Endothelial cell of umbilical vein (primary cell): ENCODE measurements at regions of chr7 and their contacts with region 1.

Region 1: DNA sequence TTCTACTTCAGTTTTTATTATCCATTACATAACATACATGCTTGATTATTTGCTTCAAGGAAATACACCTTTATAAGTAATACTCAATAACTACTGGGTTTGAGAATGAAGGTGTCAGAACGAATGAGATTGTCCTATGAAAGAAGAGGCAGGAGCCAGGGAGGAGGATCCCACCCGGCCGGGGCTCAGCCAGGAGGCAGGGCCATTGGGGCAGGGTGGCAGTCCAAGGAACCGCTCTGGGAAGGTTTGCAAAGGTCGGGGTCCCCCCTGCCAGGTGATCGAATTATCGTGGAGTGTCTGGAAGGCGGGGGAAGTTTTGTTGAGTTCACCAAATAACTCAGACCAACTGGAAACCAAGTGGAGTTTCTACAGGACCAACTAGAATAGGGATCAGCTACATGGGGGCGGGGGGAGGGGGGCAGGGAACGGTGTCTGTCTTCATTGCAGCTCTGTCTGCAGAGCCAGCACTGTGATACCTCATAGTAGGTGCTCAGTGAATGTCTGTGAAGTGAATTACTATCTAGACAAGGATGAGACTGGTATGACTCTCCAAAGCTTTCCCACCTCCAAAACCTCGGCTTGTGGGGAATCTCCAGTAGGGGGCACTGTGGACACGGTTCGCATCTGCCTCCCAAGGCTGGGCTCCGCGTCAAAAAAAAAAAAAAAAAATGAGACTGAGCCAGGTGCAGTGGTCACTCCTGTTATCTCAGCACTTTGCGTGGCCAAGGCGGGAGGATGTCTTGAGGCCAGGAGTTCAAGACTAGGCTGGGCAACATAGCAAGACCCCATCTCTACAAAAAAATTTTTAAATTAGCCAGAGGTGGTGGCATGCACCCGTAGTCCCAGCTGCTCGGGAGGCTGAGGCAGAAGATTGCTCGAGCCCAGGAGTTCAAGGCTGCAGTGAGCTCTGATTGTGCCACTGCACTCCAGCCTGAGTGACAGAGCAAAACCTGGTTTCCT is 9.4 kb downstream of the TRIM56 start:
- DNase-seq: peak; percentile 63
- H3K4me3 ChIP-seq: no peak overlapping the region
- H3K27ac ChIP-seq: peak overlapping the region; percentile 41
- H3K4me1 ChIP-seq: peaks cover 22% of the 10 kb centered on the region
- H3K27me3 ChIP-seq: no peaks in the 10 kb centered on the region
- CTCF ChIP-seq: peak; percentile 80 to 81
- POLR2A ChIP-seq: no peak

Region 2: DNA sequence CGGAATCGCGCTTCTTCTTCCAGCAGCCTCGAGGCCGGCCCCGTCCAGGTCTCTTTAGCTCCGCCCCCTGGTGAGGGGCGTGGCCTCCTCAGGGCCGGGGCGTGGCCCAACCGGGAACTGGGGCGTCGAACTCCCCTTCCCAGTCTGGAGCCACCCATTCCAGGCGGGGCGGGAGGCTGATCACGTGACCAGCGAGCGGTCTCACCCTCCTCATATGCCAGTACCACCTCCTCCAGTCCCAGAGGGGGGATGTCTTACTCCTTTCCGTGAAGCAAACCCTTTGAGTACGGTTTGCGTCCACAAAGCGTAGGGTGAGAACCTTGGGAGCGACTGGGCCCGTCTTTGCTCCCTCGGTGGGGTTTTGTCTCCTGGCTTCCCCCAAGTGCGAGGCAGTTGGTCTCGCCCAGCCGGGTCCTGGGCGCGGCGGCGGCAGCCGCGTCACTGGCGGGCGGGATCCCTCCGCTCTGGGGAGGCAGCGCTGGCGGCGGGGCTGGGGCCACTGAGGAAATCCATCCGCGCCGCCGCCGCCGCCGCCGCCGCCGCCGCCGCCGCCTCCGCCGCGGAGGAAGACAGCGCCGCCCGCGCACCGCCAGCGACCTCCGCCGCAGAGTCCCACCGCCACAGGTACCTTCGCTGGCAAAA is 421.3 kb before region 1 on chr7 and contains the start of gene GNB2:
- CTCF ChIA-PET with region 1: no interaction called
- POLR2A ChIA-PET with region 1: no interaction called
- dilution Hi-C with region 1: no loop called
- intact Hi-C with region 1: no loop called
- DNase-seq: peak; percentile 99
- H3K4me3 ChIP-seq: peak within 1 kb of the TSS; percentile 70 to 88 (median 86)
- H3K27ac ChIP-seq: peak within 1 kb of the TSS; percentile 89
- H3K4me1 ChIP-seq: peaks cover 4% of the 10 kb centered on the region
- H3K27me3 ChIP-seq: peaks cover 2 to 5% of the 10 kb centered on the region in 2 experiments
- CTCF ChIP-seq: no peak
- POLR2A ChIP-seq: peak; percentile 51
- total RNA-seq, gene GNB2: 297 and 300 TPM in 2 replicates

Region 3: GRCh38 chr7:101108330-101108857 is 13.7 kb after region 1 on chr7:
- CTCF ChIA-PET with region 1: interaction called, 21 read pairs
- POLR2A ChIA-PET with region 1: interaction called, 18 read pairs
- dilution Hi-C with region 1: no loop called
- intact Hi-C with region 1: loop called (anchors 1 kb)
- DNase-seq: peak; percentile 95
- H3K4me3 ChIP-seq: no peak overlapping the region
- H3K27ac ChIP-seq: peak overlapping the region; percentile 94
- H3K4me1 ChIP-seq: peaks cover 57% of the 10 kb centered on the region
- H3K27me3 ChIP-seq: no peaks in the 10 kb centered on the region
- CTCF ChIP-seq: no peak
- POLR2A ChIP-seq: peak; percentile 60

Region 4: DNA sequence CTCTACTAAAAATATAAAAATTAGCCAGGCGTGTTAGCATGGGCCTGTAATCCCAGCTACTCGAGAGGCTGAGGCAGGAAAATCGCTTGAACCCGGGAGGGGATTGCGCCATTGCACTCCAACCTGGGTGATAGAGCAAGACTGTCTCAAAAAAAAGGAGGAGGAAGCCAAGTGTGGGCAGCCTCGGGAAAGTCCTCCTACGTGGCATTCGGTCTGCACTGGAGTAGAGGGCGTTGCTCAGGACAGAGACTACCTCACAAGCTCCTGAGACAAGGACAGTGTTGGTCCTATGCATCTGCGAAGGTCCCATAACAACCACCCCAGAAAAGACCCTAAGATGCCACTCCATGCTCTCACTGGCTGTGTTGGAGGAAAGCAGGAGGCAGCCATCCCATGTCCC is 22.2 kb after region 1 on chr7:
- CTCF ChIA-PET with region 1: interaction called, 24 read pairs
- POLR2A ChIA-PET with region 1: interaction called, 18 read pairs
- dilution Hi-C with region 1: no loop called
- intact Hi-C with region 1: loop called (anchors 1 kb)
- DNase-seq: no peak
- H3K4me3 ChIP-seq: no peak overlapping the region
- H3K27ac ChIP-seq: peak overlapping the region; percentile 95
- H3K4me1 ChIP-seq: peaks cover 52% of the 10 kb centered on the region
- H3K27me3 ChIP-seq: no peaks in the 10 kb centered on the region
- CTCF ChIP-seq: no peak
- POLR2A ChIP-seq: no peak

Region 5: DNA sequence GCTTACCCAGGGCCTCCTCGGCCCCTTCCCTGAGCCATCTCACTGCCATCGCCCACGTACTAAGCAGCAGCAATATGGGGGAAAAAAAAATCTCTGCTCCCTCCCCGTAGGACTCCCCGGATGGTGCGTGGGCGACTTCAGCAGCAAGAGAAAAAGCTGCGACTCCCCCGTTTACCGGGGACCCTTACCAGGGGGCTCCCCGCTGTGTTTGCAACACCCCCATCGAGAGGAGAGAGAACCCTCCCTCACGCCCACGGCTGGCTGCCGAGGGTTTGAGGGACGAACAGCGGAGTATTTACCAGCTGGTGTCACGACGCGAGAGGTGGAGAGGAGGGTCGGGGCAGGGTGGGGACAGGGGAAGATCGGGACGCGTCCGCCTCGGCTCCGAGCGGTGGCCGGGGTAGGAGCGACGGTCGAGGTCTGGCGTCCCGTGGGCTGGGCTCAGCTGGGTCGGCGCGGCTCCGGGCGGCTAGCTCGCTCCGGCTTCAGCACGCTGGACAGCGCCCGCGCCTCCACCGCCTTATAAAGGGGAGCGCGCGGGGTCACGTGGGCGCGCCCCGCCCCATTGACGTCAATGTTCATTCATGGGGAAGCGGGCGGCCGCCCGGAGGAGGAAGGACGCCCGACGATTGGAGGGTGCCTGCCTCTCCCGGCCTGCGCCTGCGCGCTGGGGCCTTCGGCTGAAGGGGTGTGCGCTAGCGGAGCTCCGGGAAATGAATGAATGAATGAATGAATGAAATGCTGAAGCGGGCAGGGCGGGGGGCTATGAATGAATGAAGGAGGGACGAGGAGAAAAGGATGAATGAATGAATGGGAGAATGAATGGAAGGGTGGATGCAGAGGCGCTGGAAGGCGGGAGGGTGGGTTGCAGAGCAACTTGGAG is 70.6 kb after region 1 on chr7 and contains the start of gene VGF:
- CTCF ChIA-PET with region 1: interaction called, 8 read pairs
- POLR2A ChIA-PET with region 1: no interaction called
- dilution Hi-C with region 1: no loop called
- intact Hi-C with region 1: loop called (anchors 1 kb)
- DNase-seq: peak; percentile 86
- H3K4me3 ChIP-seq: no peak within 1 kb of the TSS
- H3K27ac ChIP-seq: no peak within 1 kb of the TSS
- H3K4me1 ChIP-seq: peaks cover 16% of the 10 kb centered on the region
- H3K27me3 ChIP-seq: peaks cover 52 to 58% of the 10 kb centered on the region in 2 experiments
- CTCF ChIP-seq: no peak
- POLR2A ChIP-seq: no peak
- total RNA-seq, gene VGF: not detected in 2 replicates